WTC11 (cell line): ENCODE measurements at regions of chr1 and their contacts with region 1.

Region 1: DNA sequence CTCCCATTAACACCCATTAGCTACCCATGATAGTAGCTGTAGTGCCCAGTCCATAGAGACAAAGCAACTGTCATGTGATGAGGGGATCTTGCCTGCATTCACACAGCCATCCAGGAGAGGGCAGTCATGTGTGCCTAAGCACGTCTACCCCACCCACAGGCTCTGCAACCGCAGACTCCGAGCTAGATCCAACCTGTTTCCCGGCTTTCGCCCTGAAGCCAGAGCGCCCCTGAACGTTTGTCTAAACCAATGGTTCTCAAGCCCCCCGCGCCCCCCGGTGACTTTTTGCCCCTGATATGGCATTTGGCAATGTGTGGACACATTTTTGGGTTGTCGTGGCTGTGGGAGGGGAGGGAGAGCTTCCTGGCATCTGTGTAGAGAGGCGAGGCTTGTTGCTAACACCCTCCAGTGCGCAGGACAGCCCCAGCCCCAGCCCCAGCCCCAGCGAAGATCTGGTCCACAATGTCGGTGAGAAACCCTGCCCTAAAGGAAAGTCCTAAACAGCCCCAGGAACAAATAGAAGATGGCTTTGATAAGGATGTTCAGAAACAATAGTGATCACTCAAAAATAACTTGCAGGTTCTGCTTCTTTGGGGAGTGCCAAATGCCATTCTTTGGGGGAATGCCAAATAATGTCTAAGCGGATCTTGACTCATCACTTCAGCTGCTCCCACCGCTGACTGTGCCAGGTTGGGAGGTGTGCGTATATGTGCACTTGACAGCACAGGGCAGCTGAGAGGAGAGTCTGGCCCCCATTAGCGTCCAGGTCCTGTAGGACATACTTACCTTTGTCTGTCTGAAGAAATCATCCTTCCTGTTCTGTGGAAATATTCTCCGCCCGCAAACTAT is 34.5 kb downstream of the SLC44A3 start:
- DNase-seq: peak; percentile 87
- ATAC-seq: peak; percentile 97
- H3K4me3 Mint-ChIP-seq: no peak overlapping the region
- H3K27ac Mint-ChIP-seq: no peak overlapping the region
- H3K4me1 Mint-ChIP-seq: no peaks in the 10 kb centered on the region
- H3K27me3 Mint-ChIP-seq: no peaks in the 10 kb centered on the region
- CTCF ChIP-seq: peak; percentile 72

Region 2: GRCh38 chr1:94819941-94820746 is 34.5 kb before region 1 on chr1 and contains the start of gene SLC44A3:
- CTCF ChIA-PET with region 1: interaction called, 18 read pairs
- POLR2A ChIA-PET with region 1: no interaction called
- DNase-seq: peak; percentile 69
- ATAC-seq: peak; percentile 94
- H3K4me3 Mint-ChIP-seq: peak within 1 kb of the TSS; percentile 84
- H3K27ac Mint-ChIP-seq: no peak within 1 kb of the TSS
- H3K4me1 Mint-ChIP-seq: peaks cover 20% of the 10 kb centered on the region
- H3K27me3 Mint-ChIP-seq: peaks cover 3% of the 10 kb centered on the region; the same call in 1 of the 2 replicates
- CTCF ChIP-seq: no peak
- total RNA-seq, gene SLC44A3: 4.7 to 7.2 TPM (median 6.9 TPM) in 3 replicates

Region 3: DNA sequence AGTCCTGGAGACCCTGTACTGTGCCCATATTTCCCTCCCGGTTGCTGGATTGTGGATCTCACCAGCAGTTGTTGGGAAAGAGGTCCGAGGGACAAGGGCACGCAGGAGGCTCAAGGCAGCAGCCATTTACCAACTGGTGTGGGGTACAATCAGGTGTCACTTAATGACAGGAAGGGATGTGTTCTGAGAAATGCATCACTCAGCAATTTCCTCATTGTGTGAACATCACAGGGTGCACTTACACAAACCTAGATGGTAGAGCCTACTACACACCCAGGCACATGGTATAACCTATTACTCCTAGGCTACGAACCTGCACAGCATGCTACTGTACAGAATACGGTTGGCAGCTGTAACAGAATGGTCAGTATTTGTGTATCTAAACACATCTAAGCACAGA is 13.9 kb before region 1 on chr1:
- CTCF ChIA-PET with region 1: interaction called, 13 read pairs
- POLR2A ChIA-PET with region 1: no interaction called
- DNase-seq: no peak
- ATAC-seq: no peak
- H3K4me3 Mint-ChIP-seq: no peak overlapping the region
- H3K27ac Mint-ChIP-seq: no peak overlapping the region
- H3K4me1 Mint-ChIP-seq: peaks cover 4% of the 10 kb centered on the region; the same call in 1 of the 2 replicates
- H3K27me3 Mint-ChIP-seq: no peaks in the 10 kb centered on the region
- CTCF ChIP-seq: no peak

Region 4: DNA sequence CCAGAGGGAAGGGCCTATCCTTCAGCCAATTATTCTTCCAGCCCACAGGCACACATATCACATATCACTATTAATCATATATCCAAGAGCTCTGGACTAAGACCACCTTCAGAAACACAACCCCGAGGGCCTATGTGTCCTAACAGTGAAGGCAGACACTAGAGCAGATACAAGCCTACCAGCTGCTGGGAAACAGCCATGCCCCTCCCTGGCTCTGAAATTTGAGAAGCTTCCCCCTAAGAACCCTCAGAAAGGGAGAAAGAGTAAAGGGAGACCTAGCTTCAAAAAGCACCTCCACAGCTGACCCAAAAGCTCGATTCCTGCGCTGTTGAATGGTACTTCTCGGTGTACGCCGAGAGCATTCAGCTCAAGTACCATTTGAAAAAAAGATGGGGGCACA is 54.8 kb after region 1 on chr1:
- CTCF ChIA-PET with region 1: interaction called, 17 read pairs
- POLR2A ChIA-PET with region 1: no interaction called
- DNase-seq: peak; percentile 33
- ATAC-seq: peak; percentile 81
- H3K4me3 Mint-ChIP-seq: peak overlapping the region; percentile 31; the same call in 1 of the 2 replicates
- H3K27ac Mint-ChIP-seq: peak overlapping the region; percentile 86
- H3K4me1 Mint-ChIP-seq: peaks cover 70% of the 10 kb centered on the region
- H3K27me3 Mint-ChIP-seq: no peaks in the 10 kb centered on the region
- CTCF ChIP-seq: no peak

Region 5: DNA sequence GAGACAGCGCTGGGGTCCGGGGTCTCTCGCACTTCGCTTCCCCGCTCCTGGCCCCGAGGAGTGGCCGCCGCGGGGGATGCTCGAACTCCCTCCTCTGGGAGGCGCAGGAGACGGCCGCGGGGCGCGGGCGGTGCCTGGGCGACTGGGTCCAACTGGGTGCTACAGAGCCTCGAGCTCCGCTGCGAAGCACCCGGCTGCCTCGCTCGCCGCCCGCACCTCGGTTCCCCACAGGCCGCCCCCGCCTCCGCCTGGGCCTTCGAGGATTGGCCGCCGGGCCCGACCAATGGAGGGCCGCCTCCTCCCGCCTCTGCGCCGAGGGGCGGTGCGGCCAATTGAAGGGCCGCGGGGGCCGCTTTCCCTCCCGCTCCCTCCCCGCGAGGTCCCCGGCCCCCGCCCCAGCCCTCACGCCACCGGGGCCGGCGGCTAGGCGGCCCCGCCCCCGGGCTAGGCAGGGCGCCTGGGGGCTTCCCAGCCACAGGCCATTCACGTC is 72.3 kb after region 1 on chr1 and contains the start of gene CNN3:
- CTCF ChIA-PET with region 1: interaction called, 20 read pairs
- POLR2A ChIA-PET with region 1: interaction called, 3 read pairs
- DNase-seq: peak; percentile 94
- ATAC-seq: peak; percentile 84
- H3K4me3 Mint-ChIP-seq: peak within 1 kb of the TSS; percentile 98
- H3K27ac Mint-ChIP-seq: peak within 1 kb of the TSS; percentile 100
- H3K4me1 Mint-ChIP-seq: peaks cover 68% of the 10 kb centered on the region
- H3K27me3 Mint-ChIP-seq: no peaks in the 10 kb centered on the region
- CTCF ChIP-seq: no peak
- total RNA-seq, gene CNN3: 183 to 187 TPM (median 185 TPM) in 3 replicates

Region 6: GRCh38 chr1:95084317-95085176 is 229.9 kb after region 1 on chr1:
- CTCF ChIA-PET with region 1: interaction called, 10 read pairs
- POLR2A ChIA-PET with region 1: no interaction called
- DNase-seq: peak; percentile 28
- ATAC-seq: peak; percentile 75
- H3K4me3 Mint-ChIP-seq: no peak overlapping the region
- H3K27ac Mint-ChIP-seq: no peak overlapping the region
- H3K4me1 Mint-ChIP-seq: peaks cover 29% of the 10 kb centered on the region
- H3K27me3 Mint-ChIP-seq: no peaks in the 10 kb centered on the region
- CTCF ChIP-seq: peak; percentile 12; the same call in 1 of the 2 replicates

Region 7: DNA sequence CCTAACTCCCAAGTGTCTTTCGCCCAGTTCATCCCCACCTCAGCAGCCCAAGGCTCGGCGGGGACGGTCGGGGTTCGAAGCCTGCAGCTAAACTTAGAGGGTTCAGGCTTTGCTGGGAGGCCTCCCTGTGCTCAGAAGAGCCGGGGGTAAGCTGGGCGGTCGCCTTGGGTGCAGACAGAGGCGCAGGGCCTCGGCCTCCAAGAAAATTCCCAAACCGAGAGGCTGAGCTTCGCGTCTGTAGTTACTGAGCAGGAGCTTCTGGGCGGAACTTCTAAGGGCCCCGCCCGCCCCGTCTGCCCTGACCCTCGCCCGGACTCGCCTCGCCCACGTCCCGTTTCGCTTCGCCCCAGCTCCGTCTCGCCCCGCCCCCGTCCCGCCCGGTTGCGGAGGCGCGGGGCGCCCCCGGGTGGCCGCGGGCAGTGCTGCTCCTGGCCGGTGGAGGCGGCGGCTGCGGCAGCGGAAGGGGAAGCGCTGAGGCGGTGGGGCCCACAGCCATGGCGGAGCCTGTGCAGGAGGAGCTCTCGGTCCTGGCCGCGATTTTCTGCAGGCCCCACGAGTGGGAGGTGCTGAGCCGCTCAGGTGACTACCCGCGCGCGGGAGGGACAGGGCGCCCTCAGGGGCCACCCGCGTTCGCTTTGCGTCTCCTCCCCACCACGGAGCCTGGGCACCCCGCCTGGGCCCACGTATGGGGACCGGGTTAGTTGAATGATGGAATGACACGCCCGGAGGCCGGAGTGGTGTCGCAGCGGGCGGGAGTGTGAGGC is 379.2 kb after region 1 on chr1 and contains the start of gene RWDD3:
- CTCF ChIA-PET with region 1: interaction called, 26 read pairs
- POLR2A ChIA-PET with region 1: no interaction called
- DNase-seq: peak; percentile 91
- ATAC-seq: peak; percentile 92
- H3K4me3 Mint-ChIP-seq: peak within 1 kb of the TSS; percentile 87
- H3K27ac Mint-ChIP-seq: peak within 1 kb of the TSS; percentile 64
- H3K4me1 Mint-ChIP-seq: peaks cover 18% of the 10 kb centered on the region
- H3K27me3 Mint-ChIP-seq: no peaks in the 10 kb centered on the region; the same call in none of the 2 replicates
- CTCF ChIP-seq: peak; percentile 72
- total RNA-seq, gene RWDD3: 13.7 to 17.4 TPM (median 13.9 TPM) in 3 replicates